ENCODE measurements at regions of chr19 and their contacts with region 1.

Region 1: DNA sequence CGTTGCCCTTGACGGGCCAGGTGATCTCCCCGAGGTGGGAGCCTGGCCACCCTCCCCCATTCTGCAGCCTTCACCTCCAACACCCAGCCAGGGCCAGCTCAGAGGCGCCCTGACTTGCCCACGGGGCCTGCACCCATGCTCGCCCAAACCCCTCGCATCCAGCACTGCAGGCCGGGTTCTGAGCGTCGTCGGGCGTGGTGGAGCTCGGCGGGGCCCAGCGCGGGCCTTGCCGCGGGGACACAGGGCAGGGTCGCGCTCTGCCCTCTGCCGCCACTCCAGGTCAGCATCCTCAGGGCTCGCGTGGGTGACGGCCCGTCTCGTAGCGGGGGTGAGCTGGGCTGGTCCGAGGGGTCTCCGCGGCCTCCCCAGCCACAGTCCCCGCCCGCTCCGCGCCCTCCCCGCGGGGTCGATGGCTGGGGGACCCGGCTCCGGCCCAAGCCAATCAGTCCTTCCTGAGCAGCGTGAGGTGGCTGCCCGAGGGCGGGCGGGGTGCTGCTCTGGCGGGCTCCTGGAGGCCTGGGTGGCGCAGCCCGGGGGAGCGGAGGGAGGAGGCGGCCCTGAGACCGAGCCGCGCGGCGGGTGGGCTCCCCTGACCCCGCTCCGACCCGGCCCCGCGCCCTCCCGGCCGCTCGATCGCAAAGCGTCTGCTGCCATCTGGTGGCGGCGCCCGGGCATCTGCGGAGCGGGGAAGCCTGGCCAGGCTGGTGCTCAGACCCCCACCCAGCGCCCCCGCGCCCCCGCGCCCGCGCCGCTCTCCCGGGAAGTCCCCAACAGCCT is 61.4 kb downstream of the CCNE1 start:
- DNase-seq: no peak
- H3K4me3 ChIP-seq: peak overlapping the region; percentile 43
- CTCF ChIP-seq: peak; percentile 85

Region 2: DNA sequence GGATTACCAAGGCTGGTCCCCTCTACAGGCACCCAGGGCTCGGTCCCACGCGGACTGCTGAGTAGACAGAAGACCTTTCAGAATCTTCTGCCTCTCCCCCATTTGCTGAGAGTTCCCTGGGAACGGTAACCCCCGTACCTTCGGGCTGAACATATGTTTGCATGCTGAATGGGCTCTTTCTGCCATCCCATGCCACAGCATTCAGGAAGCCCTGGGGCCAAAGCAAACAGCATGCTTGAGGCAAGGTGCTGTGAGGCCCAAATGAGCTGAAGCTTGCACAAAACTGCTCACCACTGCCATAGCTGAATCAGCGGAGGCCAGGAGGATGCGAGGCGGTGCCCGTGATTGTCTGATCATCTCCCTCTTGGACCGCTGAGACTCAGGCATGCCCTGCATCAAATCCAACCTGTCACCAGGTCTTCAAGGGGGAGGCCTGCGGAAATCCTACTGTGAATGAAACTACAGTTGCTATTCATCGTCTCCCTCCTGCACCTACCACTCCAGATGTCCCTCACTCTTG is 141.8 kb before region 1 on chr19:
- CTCF ChIA-PET with region 1: interaction called, 37 read pairs
- POLR2A ChIA-PET with region 1: no interaction called
- DNase-seq: no peak
- H3K4me3 ChIP-seq: no peak overlapping the region
- CTCF ChIP-seq: no peak

Region 3: GRCh38 chr19:29761575-29762232 is 111.5 kb before region 1 on chr19:
- CTCF ChIA-PET with region 1: interaction called, 82 read pairs
- POLR2A ChIA-PET with region 1: no interaction called
- DNase-seq: no peak
- H3K4me3 ChIP-seq: no peak overlapping the region
- CTCF ChIP-seq: no peak

Region 4: GRCh38 chr19:29851769-29852521 is 21.3 kb before region 1 on chr19:
- CTCF ChIA-PET with region 1: interaction called, 10 read pairs
- POLR2A ChIA-PET with region 1: no interaction called
- DNase-seq: no peak
- H3K4me3 ChIP-seq: no peak overlapping the region
- CTCF ChIP-seq: no peak

Region 5: DNA sequence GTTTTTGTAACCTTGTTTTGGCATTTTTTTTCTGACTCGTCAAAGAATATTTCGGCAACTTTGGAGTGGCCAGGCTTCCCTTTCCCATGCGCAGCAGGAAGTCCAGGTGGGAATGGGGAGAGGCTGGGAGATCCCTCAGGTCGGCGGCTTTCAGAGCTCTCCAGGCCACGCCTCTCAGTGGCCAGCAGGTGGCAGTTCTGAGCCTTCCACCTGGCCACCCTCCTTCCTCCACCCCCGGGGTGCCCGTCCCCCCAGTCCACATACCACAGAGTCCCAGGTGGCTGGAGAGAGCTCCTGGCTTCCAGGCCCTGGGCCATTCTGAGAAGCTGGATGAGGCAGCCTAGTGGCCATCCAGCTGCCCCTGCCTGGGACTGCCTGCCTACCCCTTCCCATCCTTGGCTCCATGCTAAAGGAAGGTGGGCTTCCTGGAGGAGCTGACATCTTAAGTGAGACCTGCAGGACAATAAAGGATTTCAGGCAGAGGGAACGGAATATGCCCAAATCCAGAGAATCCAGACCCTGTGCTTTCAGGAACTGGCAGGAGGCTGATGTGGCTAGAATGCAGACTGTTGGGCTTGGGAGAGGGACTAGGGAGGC is 15.1 kb before region 1 on chr19:
- CTCF ChIA-PET with region 1: interaction called, 11 read pairs
- POLR2A ChIA-PET with region 1: no interaction called
- DNase-seq: no peak
- H3K4me3 ChIP-seq: no peak overlapping the region
- CTCF ChIP-seq: peak; percentile 50

Region 6: DNA sequence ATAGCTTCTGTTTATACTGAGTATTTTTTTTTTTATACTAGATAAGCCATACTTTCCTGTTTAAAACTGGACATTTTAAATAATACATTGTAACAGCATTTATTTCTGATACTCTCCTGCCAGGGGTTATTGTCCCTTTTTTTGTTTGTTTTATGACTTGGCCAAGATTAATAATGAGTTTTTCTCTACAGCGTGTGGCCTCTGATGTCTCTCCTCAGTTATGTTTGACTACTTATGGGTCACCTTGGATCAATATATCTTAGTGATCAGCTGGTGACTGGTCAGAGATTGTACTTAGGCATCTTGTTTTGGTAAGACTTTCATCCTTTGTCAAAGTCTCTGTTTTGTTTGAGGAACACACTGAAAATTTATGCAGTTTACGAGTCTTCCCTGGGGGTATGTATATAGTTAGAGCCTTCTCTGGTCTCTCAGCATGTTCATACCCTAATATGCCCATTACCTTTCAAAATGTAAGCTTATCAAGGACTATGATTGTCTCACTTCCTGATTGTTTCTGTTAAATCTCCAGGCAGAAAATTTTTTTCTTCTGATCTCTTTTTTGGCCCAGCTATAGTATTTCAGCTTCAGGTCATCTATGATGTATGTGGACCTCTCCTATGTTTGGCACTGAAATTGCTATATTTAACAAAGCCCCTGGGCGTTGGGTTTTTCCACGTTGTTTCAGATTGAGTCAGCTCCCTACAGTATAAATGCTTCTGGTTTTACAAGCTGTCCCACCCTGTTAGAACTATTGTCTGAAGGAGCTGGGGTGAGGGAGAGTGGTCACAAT is 156.7 kb after region 1 on chr19:
- CTCF ChIA-PET with region 1: no interaction called
- POLR2A ChIA-PET with region 1: no interaction called
- DNase-seq: no peak
- H3K4me3 ChIP-seq: no peak overlapping the region
- CTCF ChIP-seq: no peak

Measured in AG04449 (cell line).